ENCODE measurements at regions of chr7 and their contacts with region 1.

Region 1: DNA sequence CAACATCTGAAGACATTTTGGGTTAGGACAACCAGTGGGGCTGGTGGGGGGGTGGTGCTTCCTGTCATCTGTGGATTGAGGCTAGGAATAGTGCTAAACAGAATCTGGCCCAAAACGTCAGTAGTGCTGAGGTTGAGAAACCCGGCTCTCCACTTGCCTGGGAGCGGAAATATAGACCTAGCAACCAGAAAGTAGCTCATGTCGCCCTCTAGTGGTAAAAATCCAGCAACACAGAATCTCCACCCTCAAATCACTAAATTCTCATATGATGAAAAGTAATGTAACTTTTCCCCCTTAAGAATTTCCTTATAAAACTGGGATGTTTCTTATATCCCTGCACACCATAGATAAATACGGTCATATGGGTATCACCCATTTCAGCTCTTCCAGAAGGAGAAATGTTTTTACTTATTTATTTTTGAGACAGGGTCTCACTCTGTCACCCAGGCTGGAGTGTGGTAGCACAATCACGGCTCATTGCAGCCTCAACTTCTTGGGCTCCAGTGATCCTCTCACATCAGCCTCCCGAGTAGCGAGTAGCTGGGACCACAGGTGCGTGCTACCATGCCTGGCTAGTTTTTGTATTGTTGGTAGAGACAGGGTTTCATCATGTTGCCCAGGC is 34.4 kb downstream of the ZC3HAV1 start:
- DNase-seq: peak; percentile 7 to 87 (median 68)

Region 2: DNA sequence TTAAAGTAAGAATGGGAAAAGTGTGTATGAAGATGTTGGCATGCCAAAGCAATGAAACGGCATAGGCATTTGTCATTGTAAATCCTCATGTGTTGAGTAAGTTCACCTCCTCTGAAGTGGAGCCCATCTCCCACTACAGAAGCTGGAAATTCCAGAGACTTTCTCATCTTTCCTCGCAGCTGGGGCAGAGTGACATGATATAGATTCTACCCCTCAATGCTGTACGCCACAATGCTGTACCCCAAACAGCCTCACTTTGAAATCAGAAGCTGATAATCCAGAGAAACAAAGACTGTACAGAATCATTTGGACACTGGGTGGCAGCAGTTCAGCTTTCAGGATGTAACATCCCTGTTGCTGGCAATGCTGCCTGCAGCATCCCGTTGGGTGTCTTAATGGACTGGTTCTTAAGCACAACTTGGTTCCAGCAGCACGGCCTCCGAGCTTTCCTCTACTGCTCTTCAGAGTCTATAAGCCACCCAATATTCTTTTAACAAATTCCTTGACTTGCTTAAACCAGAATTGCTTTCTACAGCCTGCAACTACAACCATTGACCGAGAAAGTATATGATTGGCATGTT is 58.1 kb before region 1 on chr7:
- intact Hi-C with region 1: loop called (anchors 10 kb)
- DNase-seq: peak; percentile 41 to 89 (median 72)